GM10248 (cell line): ENCODE measurements at regions of chr5 and their contacts with region 1.

Region 1: DNA sequence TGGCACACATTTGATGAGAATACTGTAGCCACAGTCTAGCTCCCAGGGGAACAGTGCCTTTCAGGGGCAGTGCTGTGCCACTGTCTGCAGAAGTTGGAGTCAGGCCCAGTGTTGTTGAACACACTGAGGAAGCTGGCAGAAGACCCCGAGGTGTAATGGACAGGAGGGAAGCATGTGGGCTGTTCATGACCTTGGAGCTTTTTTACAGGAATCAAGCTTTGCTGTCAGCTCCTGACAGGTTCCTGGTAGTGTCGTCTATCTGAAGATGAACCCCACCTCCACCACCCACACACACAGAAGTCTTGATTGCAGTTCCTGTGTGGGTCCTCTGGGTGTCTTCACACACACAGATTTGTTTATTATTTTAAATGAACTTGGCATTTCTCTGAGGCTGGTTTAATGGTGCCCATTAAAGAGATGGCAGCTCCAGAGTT is 40.3 kb upstream of the TNFAIP8 start:
- DNase-seq: peak; percentile 73
- CTCF ChIP-seq: peak; percentile 78

Region 2: DNA sequence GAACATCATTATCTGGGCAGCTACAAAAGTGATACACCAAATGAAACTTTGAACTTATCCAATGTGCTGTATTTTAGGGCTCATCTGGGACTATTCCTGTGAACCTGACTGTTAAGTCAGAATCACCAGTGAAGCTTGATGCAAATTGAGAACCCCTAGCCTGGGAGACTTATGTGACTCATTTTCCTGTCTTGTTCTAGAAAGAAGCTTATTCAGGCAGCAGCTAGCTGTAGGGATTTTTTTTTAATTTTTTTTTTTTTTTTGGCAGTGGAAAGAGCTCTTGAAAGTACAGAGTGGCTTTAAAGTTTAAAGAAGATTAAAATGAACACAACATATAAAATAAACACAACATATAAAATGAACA is 40.8 kb before region 1 on chr5:
- CTCF ChIA-PET with region 1: interaction called, 21 read pairs
- POLR2A ChIA-PET with region 1: no interaction called
- DNase-seq: peak; percentile 23
- CTCF ChIP-seq: no peak

Region 3: DNA sequence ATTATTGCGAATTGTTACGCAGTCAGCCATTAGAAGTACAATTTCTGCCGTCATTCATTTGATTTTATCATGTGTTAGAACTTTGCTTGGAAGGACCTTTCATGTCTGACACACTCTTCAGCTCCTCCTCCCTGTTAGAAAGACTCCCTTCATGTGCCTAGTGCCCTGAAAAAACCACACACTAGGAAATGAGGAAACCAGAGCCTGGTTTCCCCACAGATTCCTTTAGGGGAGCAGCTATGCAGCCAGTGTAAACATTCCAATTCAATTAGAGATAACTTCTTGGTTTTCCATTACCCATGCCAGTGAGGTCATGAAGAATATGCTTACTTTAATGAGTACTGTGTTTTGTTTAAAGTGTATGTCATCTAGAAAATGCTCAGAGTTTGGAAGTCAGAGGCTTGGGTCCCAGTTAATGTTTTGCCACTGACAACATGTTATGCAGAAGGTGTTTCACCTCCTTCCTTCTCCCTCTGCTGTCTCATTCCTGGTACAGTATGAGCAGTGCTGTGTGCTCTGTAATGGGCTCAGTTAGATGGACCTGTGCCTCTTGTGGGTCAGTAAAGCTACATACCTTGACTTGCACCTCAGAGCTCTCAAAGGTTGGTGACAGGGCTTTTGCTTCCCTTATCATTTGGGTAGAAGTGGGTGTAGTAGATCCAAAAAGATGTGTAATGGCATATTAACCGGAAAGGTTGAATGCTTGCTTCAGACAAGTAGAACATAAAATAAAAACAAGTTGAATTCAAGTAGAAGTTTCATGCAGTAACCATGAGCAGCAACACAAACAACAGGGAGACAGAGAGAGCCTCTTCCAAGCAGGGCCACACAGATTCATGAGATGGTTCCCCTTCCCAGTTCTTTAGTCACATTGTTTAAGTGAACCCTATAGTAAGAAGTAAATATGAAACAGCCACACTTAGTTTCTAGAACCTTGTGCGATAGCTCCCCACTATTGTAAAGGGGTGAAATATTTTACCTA is 12.3 kb before region 1 on chr5:
- CTCF ChIA-PET with region 1: interaction called, 25 read pairs
- POLR2A ChIA-PET with region 1: no interaction called
- DNase-seq: no peak
- CTCF ChIP-seq: no peak

Region 4: DNA sequence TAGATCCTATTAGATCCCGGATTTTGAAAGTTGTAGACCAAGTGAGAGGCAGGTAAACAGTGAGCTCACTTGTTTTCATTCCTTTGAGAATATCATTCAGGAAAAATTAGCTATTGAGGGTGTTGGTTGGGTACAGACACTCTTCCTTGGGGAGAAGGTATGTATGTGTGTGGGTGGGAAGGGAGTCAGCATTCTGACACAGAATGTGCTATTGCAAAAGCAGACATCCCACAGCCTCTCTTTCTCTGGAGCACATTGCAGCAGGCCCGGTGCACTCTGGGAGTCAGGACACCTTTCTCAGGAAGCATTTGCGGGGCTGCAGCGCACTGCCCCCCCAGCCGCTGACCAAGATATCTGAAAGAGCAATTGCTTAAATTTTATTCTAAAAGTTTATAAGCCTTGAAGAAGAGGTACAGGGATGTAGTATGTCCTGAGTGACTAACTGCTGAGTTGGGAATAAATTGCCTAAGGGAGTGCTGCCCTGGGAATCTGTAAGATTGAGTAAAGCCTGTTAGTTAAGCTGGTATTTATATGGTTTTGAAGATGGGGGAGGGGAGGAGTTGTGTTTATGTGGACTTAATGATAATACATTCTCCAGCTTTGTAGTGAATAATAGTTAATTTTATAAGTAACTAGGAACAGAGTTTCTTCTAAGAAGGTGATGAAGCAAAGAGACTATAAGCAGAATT is 45.5 kb after region 1 on chr5:
- CTCF ChIA-PET with region 1: interaction called, 13 read pairs
- POLR2A ChIA-PET with region 1: interaction called, 4 read pairs
- DNase-seq: no peak
- CTCF ChIP-seq: no peak

Region 5: GRCh38 chr5:119393201-119393691 is 77.7 kb after region 1 on chr5:
- CTCF ChIA-PET with region 1: no interaction called
- POLR2A ChIA-PET with region 1: no interaction called
- DNase-seq: no peak
- CTCF ChIP-seq: no peak

Region 6: GRCh38 chr5:119613937-119614336 is 298.4 kb after region 1 on chr5:
- CTCF ChIA-PET with region 1: no interaction called
- POLR2A ChIA-PET with region 1: no interaction called
- DNase-seq: no peak
- CTCF ChIP-seq: no peak